Ovary (tissue), 10 donors: ENCODE measurements at regions of chr12 and their contacts with region 1.

Region 1: GRCh38 chr12:77042833-77043232 is 22.5 kb downstream of the E2F7 start:
- DNase-seq: no peak
- H3K4me3 ChIP-seq: no peak overlapping the region
- H3K27ac ChIP-seq: no peak overlapping the region
- H3K4me1 ChIP-seq: no peaks in the 10 kb centered on the region
- H3K27me3 ChIP-seq: no peaks in the 10 kb centered on the region
- CTCF ChIP-seq: no peak
- EP300 ChIP-seq: no peak
- POLR2A ChIP-seq: no peak

Region 2: GRCh38 chr12:76976777-76977382 is 66.0 kb before region 1 on chr12:
- intact Hi-C with region 1: no loop called
- DNase-seq: no peak
- H3K4me3 ChIP-seq: no peak overlapping the region
- H3K27ac ChIP-seq: no peak overlapping the region
- H3K4me1 ChIP-seq: no peaks in the 10 kb centered on the region
- H3K27me3 ChIP-seq: no peaks in the 10 kb centered on the region
- CTCF ChIP-seq: no peak
- EP300 ChIP-seq: no peak
- POLR2A ChIP-seq: no peak

Region 3: DNA sequence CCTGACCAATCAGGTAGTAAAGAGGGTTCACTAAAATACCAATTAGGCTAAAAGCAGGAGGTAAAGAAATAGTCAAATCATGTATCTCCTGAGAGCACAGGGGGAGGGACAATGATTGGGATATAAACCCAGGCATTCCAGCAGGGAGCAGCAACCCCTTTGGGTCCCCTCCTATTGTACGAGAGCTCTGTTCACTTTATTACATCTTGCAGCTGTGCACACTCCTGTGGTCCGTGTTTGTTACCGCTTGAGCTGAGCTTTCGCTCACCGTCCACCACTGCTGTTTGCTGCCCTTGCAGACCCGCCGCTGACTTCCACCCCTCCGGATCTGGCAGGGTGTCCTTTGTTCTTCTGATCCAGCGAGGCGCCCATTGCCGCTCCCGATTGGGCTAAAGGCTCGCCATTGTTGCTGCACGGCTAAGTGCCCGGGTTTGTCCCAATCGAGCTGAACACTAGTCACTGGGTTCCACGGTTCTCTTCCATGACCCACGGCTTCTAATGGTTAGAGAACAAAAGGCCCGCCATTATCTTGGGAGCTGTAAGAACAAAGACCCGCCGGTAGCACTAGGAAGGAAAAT is 41.6 kb before region 1 on chr12:
- intact Hi-C with region 1: loop called in 1 of 4 experiments (anchors 1 kb)
- DNase-seq: no peak
- H3K4me3 ChIP-seq: no peak overlapping the region
- H3K27ac ChIP-seq: no peak overlapping the region
- H3K4me1 ChIP-seq: no peaks in the 10 kb centered on the region
- H3K27me3 ChIP-seq: no peaks in the 10 kb centered on the region
- CTCF ChIP-seq: no peak
- EP300 ChIP-seq: no peak
- POLR2A ChIP-seq: no peak

Region 4: GRCh38 chr12:77232045-77232444 is 189.2 kb after region 1 on chr12:
- intact Hi-C with region 1: no loop called
- DNase-seq: peak in 1 of 5 donors; percentile 32
- H3K4me3 ChIP-seq: no peak overlapping the region
- H3K27ac ChIP-seq: peak overlapping the region in 1 of 2 donors; percentile 73
- H3K4me1 ChIP-seq: peaks cover 10% of the 10 kb centered on the region
- H3K27me3 ChIP-seq: no peaks in the 10 kb centered on the region
- CTCF ChIP-seq: no peak
- EP300 ChIP-seq: no peak
- POLR2A ChIP-seq: no peak